Mammary epithelial cell (primary cell): ENCODE measurements at regions of chr16 and their contacts with region 1.

Region 1: DNA sequence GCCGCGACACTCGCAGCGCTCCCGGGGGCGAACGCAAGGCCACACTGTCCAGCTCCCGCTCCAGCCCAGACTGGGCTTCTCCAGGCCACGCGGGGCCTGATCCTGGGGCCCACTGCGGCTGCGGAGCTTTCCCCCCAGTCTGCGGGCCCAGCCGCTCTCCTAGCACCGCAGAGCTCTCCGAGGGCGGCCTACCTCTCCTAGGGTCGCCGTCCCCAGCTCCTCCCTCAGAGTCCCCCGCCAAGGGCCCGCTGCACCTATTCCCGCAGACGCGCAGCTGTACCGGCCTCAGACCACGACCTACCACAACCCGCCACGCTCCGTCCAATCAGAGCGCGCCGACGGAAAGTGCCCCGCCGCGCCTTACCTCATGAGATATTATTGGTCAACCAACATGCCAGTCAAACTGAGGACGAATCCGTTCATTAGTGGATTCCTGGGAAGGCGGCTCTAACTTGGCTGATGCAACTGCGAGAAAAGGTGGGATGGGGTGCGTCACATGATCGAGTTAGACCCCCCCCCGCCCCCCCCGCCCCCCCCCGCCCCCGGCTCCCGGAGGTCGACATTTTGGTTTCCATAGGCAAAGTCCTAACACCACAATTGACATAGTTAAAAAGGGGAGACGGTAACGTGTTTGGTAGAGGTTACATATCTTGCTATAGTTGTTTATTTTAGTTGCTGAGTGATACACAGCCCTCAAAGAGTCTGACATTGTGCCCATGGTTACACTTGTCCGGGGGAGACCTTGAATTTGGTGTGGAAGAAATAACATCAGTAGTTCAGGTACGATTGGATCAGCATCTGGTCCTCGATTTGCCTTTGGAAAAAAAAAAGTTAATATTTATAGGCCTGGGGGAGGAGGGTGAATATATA is at the start of gene AARS1:
- DNase-seq: peak; percentile 100
- H3K4me3 ChIP-seq: peak within 1 kb of the TSS; percentile 68 to 92 (median 83)
- H3K27ac ChIP-seq: peak within 1 kb of the TSS; percentile 95
- H3K4me1 ChIP-seq: peaks cover 4% of the 10 kb centered on the region
- H3K27me3 ChIP-seq: no peaks in the 10 kb centered on the region
- CTCF ChIP-seq: no peak
- total RNA-seq, gene AARS1: 191 to 198 TPM

Region 2: DNA sequence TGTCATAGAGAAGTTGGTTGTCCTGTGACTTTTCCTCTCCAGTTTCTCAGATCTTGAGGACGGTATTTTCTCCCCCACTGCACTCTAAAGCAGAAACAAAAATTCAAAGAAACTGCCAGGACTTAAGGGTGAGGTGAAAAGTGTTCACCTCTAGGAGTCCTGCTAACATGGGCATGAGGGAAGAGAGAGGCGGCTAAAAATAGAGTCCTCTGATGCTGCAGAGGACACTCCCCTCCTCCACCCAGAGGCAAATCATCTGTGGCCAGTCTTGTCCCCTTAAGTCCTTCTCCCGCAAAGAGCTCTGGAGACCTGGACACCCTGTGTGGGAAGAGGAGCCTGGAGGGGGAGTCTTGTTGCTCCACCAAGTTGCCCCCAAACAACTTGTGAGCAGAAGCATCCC is 52.6 kb after region 1 on chr16:
- CTCF ChIA-PET with region 1: no interaction called
- dilution Hi-C with region 1: no loop called
- in situ Hi-C with region 1: no loop called
- intact Hi-C with region 1: loop called (anchors 1 kb)
- DNase-seq: no peak
- H3K4me3 ChIP-seq: no peak overlapping the region
- H3K27ac ChIP-seq: no peak overlapping the region
- H3K4me1 ChIP-seq: peaks cover 5% of the 10 kb centered on the region
- H3K27me3 ChIP-seq: no peaks in the 10 kb centered on the region
- CTCF ChIP-seq: no peak

Region 3: DNA sequence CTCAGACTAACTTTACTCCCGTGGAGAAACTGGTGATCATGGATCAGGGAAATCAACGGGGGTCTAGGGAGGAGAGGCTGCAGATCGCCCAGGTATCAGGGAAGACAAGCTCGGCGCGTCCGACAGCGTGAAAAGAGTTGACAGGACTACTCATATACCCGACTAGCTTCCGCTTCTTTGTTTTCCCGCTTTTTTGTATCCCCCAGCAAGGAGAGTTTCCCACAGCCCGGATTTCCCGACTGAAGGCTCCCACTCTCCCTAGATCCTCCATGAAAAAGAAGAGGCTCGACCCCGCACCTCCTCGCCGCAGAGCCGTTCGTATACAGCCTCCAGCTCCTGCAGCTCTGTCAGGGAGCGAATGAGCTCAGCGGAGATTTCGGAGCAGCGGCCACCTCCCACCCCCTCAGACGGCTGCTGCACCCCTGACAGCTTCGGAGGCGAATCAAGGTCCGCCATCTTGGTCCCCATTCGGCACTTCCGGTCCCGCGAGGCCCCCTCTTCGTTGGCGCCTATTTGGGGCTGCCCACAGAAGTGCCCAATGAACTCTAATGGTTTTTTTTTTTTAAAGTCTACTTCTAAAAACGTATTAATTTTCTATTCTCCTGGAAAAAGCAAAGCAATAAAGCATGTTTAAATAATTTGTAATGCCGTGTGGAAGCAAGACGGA is 233.7 kb after region 1 on chr16 and contains the start of gene COG4:
- CTCF ChIA-PET with region 1: no interaction called
- dilution Hi-C with region 1: no loop called
- in situ Hi-C with region 1: no loop called
- intact Hi-C with region 1: loop called (anchors 10 kb)
- DNase-seq: peak; percentile 77
- H3K4me3 ChIP-seq: peak within 1 kb of the TSS; percentile 90 to 97 (median 93)
- H3K27ac ChIP-seq: peak within 1 kb of the TSS; percentile 83
- H3K4me1 ChIP-seq: peaks cover 35% of the 10 kb centered on the region
- H3K27me3 ChIP-seq: no peaks in the 10 kb centered on the region
- CTCF ChIP-seq: no peak
- total RNA-seq, gene COG4: 42.7 to 52.0 TPM

Region 4: DNA sequence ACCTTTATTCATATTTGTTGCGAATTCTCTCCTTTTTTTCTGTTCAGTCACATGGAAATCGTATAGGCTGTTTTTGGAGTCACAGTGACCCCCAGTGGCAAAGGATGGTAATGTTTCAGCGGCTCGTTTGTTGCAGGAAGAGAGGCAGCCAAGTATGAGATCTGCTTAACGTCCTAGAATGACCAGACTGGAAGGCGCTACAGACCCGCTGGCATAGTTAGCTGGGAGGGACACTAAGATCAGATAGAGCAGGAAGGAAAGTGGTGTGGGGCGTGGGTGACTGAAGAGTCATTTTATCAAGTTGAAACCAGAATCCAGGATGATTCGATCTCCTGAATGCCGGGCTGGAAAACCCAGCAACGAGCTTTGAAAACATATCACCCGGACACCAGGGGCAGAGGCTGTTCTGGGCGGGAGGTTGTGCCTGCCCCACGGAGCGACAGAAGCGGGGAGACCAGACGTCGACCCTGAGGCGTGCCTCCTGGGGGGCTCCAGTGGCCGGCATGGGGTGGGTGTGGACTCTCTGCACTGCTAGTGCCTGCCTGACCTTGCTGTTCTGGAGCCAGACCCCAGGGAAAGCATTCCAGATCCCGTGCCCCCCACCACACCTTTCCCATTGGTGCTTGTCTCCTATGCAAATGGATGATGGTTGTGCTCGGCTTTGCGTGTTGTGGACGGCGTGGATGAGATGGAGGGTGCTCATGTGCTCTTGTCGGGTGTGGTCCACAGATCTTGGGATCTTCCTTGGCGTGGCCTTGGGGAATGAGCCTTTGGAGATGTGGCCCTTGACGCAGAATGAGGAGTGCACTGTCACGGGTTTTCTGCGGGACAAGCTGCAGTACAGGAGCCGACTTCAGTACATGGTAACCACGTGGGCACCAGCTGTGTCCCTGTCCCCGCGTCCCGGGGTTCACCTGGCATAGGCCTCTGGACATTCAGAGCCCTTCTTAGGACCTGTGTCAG is 364.6 kb after region 1 on chr16:
- CTCF ChIA-PET with region 1: no interaction called
- dilution Hi-C with region 1: no loop called
- in situ Hi-C with region 1: no loop called
- intact Hi-C with region 1: no loop called
- DNase-seq: peak; percentile 79
- H3K4me3 ChIP-seq: no peak overlapping the region
- H3K27ac ChIP-seq: no peak overlapping the region
- H3K4me1 ChIP-seq: peaks cover 10% of the 10 kb centered on the region
- H3K27me3 ChIP-seq: no peaks in the 10 kb centered on the region
- CTCF ChIP-seq: peak; percentile 79 to 84